Heart right ventricle (tissue), 16 donors: ENCODE measurements at regions of chr4 and their contacts with region 1.

Region 1: DNA sequence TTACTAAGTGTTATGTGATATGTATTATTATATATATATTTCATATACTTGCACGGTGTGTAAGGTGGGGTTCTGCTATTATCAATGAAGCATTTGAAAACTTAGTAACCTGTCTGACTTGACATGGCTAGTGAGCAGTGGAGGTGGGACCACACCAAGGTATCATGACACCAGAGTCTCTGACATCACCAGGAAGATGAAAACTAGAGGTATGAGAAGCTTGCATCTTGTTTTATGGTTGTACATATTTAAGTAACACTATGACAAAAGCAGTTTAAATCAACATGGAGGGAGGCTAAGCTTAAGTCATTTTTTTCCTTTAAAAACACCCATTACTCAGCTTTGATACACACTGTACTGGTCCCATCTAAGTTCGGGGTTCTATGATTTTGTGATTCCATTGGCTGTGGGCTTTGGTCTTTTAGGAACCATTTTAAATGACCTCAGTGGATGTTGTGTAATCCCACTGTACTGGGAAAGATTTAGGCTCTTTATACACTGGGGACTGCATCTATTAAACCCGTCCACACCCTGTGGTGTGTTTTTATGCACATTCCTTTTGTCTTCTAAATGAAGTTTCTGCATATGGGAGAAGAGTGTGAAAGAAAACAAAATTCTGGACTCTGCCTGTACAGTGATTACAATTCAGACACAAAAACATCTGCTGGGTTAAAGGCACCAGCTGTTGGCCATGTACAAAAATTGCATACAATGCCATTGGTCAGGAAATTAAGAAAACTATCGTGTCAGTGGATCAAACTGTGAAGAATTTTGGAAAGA is 570.6 kb downstream of the SPRY1 start:
- DNase-seq: no peak
- ATAC-seq: peak in 7 of 8 donors; percentile 62 to 95 (median 89)
- H3K4me3 ChIP-seq: no peak overlapping the region
- H3K27ac ChIP-seq: peak overlapping the region in 3 of 10 donors; percentile 26 to 55 (median 49)
- H3K4me1 ChIP-seq: no peaks in the 10 kb centered on the region
- H3K27me3 ChIP-seq: no peaks in the 10 kb centered on the region
- CTCF ChIP-seq: no peak

Region 2: GRCh38 chr4:123930996-123931395 is 36.2 kb before region 1 on chr4:
- intact Hi-C with region 1: loop called in 1 of 10 experiments (anchors 2 kb)
- DNase-seq: no peak
- ATAC-seq: peak in 1 of 8 donors; percentile 71
- H3K4me3 ChIP-seq: no peak overlapping the region
- H3K27ac ChIP-seq: peak overlapping the region in 1 of 10 donors; percentile 23
- H3K4me1 ChIP-seq: peaks cover 0 to 12% (median 8%) of the 10 kb centered on the region in 9 donors
- H3K27me3 ChIP-seq: no peaks in the 10 kb centered on the region
- CTCF ChIP-seq: no peak